Activated T-helper 1 cell treated with anti-CD3 and anti-CD28 coated beads, Interleukin-12 subunit alpha, Interleukin-12 subunit beta, Interleukin-2, Interleukin-4 antibody, amounts not matched to agents 30 ng/mL and 10 ng/mL and 1 ng/mL, durations not matched to agents 14 hours and 24 hours and 36 hours (primary cell): ENCODE measurements at regions of chr12 and their contacts with region 1.

Region 1: DNA sequence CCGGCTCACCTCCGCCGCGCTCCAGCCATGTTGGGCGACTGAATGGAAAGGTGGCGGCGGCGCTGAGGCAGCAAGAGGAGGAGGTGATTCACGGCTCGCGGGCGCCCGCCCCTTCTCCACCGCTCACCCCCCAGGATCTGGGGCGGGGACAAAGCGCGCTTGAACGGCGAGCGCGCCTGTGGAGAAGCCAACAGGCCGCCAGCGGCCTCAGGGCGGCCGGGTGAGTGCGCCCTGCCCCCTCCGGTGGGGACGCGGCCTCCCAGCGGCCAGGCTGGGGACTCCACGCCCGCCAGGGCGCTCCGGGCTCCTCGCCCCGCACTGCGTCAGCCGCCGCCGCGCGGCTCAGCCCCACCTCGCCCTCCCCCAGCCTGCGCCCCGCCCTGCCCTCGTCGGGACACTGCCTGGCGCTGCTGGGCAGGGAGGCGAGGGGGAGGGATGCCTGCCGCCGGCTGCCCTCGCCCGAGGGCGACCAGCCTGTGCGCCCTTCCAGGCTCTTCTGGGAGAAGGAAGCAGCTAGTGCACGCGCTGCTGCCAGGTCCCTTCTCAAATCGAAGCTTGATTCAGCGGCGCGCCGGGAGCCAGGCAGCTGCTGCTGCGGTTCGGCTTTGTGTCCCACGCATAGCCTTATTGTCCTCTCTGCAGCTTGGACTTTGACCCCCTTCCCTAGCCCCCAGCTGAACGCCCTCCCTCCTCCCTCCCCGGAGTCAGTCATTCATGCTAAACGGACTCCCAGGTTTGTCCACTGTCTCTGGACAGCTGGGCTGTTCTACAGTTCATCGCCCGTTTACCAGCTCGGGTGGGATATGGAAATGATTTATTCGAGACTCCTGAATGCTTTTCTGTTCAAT is at the start of gene KIF21A:
- DNase-seq: peak; percentile 84
- H3K4me3 Mint-ChIP-seq: peak within 1 kb of the TSS; percentile 89
- H3K27ac Mint-ChIP-seq: peak within 1 kb of the TSS; percentile 91
- H3K4me1 Mint-ChIP-seq: peaks cover 24% of the 10 kb centered on the region
- H3K27me3 Mint-ChIP-seq: peaks cover 2% of the 10 kb centered on the region
- total RNA-seq, gene KIF21A: 23.3 and 25.2 TPM in 2 replicates

Region 2: DNA sequence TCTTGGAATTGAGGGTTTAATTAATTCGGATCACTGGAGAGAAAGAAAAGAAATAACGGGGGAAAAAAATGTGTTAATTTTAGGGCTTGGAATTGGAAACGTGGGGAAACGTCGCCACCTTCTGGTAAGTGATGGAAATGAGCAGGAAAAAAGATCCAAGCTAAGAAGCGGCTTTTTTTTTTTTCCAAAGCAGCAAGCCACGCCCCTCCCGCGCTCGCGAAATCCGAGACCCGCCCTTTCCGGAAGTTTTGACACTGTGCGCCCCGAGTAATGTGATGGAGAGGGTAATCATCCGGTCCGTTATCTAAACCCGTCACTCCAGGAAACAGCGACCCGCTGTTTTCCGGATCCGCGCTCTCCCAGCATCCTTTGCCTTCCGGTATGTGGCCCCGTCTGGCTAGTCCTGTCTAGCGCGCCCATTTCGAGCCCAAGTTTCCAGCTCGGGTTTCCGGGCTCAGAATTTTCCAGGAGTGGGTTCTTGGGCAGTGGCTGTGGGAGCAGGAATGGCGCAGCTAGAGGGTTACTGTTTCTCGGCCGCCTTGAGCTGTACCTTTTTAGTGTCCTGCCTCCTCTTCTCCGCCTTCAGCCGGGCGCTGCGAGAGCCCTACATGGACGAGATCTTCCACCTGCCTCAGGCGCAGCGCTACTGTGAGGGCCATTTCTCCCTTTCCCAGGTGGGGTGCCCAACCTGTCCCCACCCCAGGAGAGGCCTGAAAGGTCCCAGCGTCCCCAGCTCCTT is 1126.7 kb before region 1 on chr12 and contains the start of gene ALG10B:
- intact Hi-C with region 1: loop called (anchors 5 kb)
- DNase-seq: peak; percentile 90
- H3K4me3 Mint-ChIP-seq: peak within 1 kb of the TSS; percentile 97
- H3K27ac Mint-ChIP-seq: peak within 1 kb of the TSS; percentile 90
- H3K4me1 Mint-ChIP-seq: peaks cover 25% of the 10 kb centered on the region
- H3K27me3 Mint-ChIP-seq: no peaks in the 10 kb centered on the region
- total RNA-seq, gene ALG10B: 11.8 and 15.9 TPM in 2 replicates

Region 3: GRCh38 chr12:39145175-39145999 is 297.9 kb before region 1 on chr12:
- intact Hi-C with region 1: no loop called
- DNase-seq: peak; percentile 19
- H3K4me3 Mint-ChIP-seq: peak overlapping the region; percentile 31
- H3K27ac Mint-ChIP-seq: no peak overlapping the region
- H3K4me1 Mint-ChIP-seq: no peaks in the 10 kb centered on the region
- H3K27me3 Mint-ChIP-seq: peaks cover 25% of the 10 kb centered on the region

Region 4: DNA sequence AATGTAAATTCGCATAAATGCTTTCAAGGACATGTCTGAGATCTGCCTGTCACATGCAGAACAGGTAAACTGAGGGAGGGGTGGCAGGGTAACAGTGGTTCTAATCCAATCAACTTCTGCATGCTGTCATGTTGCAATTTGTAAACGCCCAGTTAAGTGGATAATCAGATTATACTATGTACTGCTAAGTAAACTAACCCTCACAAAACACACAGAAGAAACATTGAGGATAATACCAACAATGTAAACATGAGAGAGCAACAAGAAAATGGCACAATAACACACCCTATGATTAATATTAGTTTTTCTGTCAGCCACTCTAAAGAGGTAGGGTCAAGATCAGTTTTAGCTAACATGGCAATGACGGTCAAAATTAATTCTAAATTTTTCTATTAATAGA is 124.1 kb before region 1 on chr12:
- intact Hi-C with region 1: loop called (anchors 2 kb)
- DNase-seq: no peak
- H3K4me3 Mint-ChIP-seq: no peak overlapping the region
- H3K27ac Mint-ChIP-seq: no peak overlapping the region
- H3K4me1 Mint-ChIP-seq: peaks cover 4% of the 10 kb centered on the region
- H3K27me3 Mint-ChIP-seq: no peaks in the 10 kb centered on the region

Region 5: DNA sequence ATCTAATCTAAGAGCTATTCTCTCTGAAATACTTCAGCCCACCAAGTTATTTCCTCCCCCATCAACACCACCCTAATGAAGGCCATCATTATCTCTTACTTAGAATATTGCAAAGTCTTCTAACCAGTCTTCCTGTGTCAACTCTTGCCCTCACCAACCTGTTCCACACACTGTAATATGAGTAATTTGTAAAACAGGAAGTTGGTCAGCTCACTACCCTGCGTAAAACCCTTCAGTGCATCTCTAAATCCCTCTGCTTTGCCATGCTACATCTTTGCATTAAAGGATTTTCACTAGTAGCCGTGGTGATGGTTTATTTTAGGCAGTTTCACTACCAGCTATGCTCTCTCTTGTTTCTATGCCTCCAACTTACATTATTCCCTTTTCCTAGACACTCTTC is 70.4 kb before region 1 on chr12:
- intact Hi-C with region 1: loop called (anchors 1 kb)
- DNase-seq: peak; percentile 9
- H3K4me3 Mint-ChIP-seq: peak overlapping the region; percentile 0
- H3K27ac Mint-ChIP-seq: peak overlapping the region; percentile 70
- H3K4me1 Mint-ChIP-seq: peaks cover 28% of the 10 kb centered on the region
- H3K27me3 Mint-ChIP-seq: no peaks in the 10 kb centered on the region

Region 6: GRCh38 chr12:39467432-39467870 is 24.1 kb after region 1 on chr12:
- intact Hi-C with region 1: loop called (anchors 1 kb)
- DNase-seq: no peak
- H3K4me3 Mint-ChIP-seq: no peak overlapping the region
- H3K27ac Mint-ChIP-seq: peak overlapping the region; percentile 62
- H3K4me1 Mint-ChIP-seq: peaks cover 20% of the 10 kb centered on the region
- H3K27me3 Mint-ChIP-seq: peaks cover 3% of the 10 kb centered on the region

Region 7: DNA sequence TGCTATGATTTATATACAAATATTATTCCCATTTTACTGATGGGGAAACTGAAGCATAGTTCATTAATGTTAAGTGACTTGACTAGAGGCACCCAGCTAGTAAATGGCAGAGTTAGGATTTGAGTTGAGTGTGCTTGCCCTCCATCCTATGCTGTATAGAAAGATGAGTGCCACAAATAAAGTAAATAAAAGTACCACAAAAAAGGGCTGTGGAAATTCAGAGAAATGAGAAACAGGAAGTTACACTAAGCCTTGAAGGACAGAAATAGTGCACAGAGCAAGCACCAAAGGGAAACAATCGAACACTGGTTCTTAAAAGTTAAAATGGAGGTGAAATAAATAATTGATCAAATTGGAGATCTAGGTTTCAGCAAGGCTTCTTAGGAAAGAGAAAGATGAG is 185.5 kb after region 1 on chr12:
- intact Hi-C with region 1: loop called (anchors 1 kb)
- DNase-seq: no peak
- H3K4me3 Mint-ChIP-seq: peak overlapping the region; percentile 58
- H3K27ac Mint-ChIP-seq: peak overlapping the region; percentile 94
- H3K4me1 Mint-ChIP-seq: peaks cover 46% of the 10 kb centered on the region
- H3K27me3 Mint-ChIP-seq: no peaks in the 10 kb centered on the region

Region 8: GRCh38 chr12:39692258-39692853 is 249.1 kb after region 1 on chr12:
- intact Hi-C with region 1: loop called (anchors 2 kb)
- DNase-seq: no peak
- H3K4me3 Mint-ChIP-seq: no peak overlapping the region
- H3K27ac Mint-ChIP-seq: no peak overlapping the region
- H3K4me1 Mint-ChIP-seq: peaks cover 2% of the 10 kb centered on the region
- H3K27me3 Mint-ChIP-seq: peaks cover 4% of the 10 kb centered on the region